ENCODE measurements at regions of chr9 and their contacts with region 1.

Region 1: DNA sequence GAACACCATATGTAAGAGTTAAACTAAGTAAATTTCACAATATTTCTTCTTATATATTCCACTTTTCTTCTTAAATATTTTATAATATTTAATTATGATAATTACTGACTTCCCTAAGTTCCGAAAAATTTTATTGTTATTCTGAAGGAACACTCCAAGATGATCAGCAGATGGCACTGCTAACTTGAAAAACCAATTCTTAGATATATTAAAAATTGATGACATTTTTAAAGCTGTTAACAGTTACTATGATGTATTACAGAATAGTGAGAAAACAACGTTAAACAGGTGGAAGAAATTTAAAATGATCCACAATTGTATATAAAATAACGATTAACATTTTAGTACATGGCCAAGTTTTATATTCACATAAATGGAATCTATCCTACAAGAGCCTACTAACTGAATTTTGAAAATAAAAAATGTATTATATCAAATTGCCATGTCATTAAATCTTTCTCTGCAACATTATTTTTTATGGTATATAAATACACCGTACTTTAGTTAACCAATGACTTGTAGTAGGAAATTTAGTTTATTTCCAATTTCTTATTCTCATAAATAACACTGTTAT is 30.1 kb upstream of the MUSK start:
- DNase-seq: peak; percentile 64
- ATAC-seq: no peak
- H3K4me3 ChIP-seq: 0 out of 2 replicates have a peak overlapping the region, but pooled peaks have one; percentile 19
- H3K27ac ChIP-seq: peak overlapping the region; percentile 96
- H3K4me1 ChIP-seq: peaks cover 39% of the 10 kb centered on the region
- H3K27me3 ChIP-seq: no peaks in the 10 kb centered on the region
- CTCF ChIP-seq: peak; percentile 59

Region 2: DNA sequence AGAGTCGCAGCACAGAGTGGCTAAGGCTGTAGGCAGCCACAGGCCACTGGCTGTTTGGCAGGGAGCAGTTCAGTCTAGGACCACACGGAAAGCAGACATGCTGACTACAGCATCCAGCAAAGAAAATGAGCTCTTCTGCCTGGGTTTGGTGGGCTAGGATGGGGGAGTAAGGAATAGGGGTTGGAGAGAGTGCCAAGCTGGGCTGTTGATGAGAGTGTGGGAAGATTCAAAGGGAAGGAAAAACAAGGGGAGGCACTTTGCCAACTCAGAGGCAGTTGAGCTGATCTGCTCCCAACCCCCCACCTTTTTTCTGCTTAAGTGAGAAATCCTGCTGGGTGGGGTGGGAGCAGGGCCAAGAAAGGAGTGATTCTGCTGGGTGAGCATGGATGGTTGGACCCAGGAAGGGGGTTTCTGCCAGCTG is 94.8 kb before region 1 on chr9:
- CTCF ChIA-PET with region 1: no interaction called
- POLR2A ChIA-PET with region 1: no interaction called
- intact Hi-C with region 1: no loop called
- DNase-seq: no peak
- ATAC-seq: no peak
- H3K4me3 ChIP-seq: no peak overlapping the region
- H3K27ac ChIP-seq: no peak overlapping the region
- H3K4me1 ChIP-seq: peaks cover 24% of the 10 kb centered on the region
- H3K27me3 ChIP-seq: no peaks in the 10 kb centered on the region
- CTCF ChIP-seq: no peak

Region 3: GRCh38 chr9:110744753-110745384 is 106.4 kb after region 1 on chr9:
- CTCF ChIA-PET with region 1: no interaction called
- POLR2A ChIA-PET with region 1: interaction called, 3 read pairs
- intact Hi-C with region 1: loop called (anchors 2 kb)
- DNase-seq: peak; percentile 91
- ATAC-seq: peak; percentile 86
- H3K4me3 ChIP-seq: peak overlapping the region; percentile 42; the same call in 1 of the 2 replicates
- H3K27ac ChIP-seq: peak overlapping the region; percentile 91
- H3K4me1 ChIP-seq: peaks cover 51% of the 10 kb centered on the region
- H3K27me3 ChIP-seq: no peaks in the 10 kb centered on the region
- CTCF ChIP-seq: no peak

Region 4: GRCh38 chr9:110810262-110810958 is 171.9 kb after region 1 on chr9:
- CTCF ChIA-PET with region 1: no interaction called
- POLR2A ChIA-PET with region 1: interaction called, 19 read pairs
- intact Hi-C with region 1: no loop called
- DNase-seq: no peak
- ATAC-seq: no peak
- H3K4me3 ChIP-seq: no peak overlapping the region
- H3K27ac ChIP-seq: no peak overlapping the region
- H3K4me1 ChIP-seq: peaks cover 27% of the 10 kb centered on the region
- H3K27me3 ChIP-seq: no peaks in the 10 kb centered on the region
- CTCF ChIP-seq: no peak

Region 5: DNA sequence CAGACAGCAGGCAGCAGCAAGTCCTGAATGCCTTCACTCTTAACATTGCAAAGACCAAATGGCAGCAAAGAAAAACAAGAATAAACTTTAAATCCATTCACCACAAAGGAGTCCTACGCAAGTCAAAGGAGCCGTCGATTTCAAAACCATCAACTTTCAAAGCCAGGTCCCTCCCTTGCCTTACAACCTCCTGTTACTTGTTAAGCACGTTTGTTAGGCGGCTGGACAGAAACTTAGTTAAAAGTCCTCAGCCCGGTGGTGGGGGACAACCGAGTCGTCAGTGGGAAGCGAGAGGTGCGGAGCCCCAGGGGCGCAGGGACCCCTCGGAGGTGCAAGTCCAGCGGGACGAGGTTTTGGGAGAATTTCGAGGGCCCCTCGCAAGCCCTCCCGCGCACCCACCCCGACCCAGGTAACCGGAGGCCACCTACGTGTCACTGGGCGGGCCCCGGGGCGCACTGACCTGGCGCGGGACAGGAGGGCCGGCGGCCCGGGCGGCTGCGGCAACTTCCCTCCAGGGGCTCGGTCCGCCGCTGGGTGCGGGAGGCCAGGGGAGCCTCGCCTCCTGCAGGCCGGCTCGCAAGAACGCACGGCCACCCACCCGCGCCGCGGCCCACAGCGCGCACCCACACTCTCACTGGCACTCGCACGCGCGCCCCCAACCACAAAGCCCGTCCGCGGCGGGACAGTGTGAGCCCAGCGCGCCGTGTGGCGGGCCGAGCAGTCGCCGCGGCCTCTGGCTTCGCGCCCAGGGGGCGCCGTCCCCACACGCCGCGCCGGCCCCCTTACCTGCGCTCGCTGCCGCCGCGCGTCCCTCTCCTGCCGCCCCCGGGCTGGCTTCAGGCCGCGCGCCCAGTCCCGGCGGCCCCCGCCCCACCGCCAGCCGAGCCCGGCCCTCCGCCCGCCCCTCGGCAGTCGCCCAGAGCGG is 399.2 kb after region 1 on chr9:
- CTCF ChIA-PET with region 1: interaction called, 3 read pairs
- POLR2A ChIA-PET with region 1: no interaction called
- intact Hi-C with region 1: loop called (anchors 5 kb)
- DNase-seq: peak; percentile 42
- ATAC-seq: peak; percentile 39
- H3K4me3 ChIP-seq: peak overlapping the region; percentile 83
- H3K27ac ChIP-seq: peak overlapping the region; percentile 66
- H3K4me1 ChIP-seq: peaks cover 37% of the 10 kb centered on the region
- H3K27me3 ChIP-seq: no peaks in the 10 kb centered on the region
- CTCF ChIP-seq: no peak